CD4-positive, alpha-beta T cell (primary cell): ENCODE measurements at regions of chr1 and their contacts with region 1.

Region 1: GRCh38 chr1:231315887-231316286 is 21.8 kb downstream of the EXOC8 start:
- DNase-seq: peak in 12 of 14 experiments; percentile 15 to 65 (median 30)
- ATAC-seq: peak; percentile 48
- H3K4me3 ChIP-seq: no peak overlapping the region
- H3K4me3 Mint-ChIP-seq: no peak overlapping the region
- H3K27ac ChIP-seq: no peak overlapping the region
- H3K27ac Mint-ChIP-seq: no peak overlapping the region
- H3K4me1 ChIP-seq: no peaks in the 10 kb centered on the region
- H3K4me1 Mint-ChIP-seq: no peaks in the 10 kb centered on the region
- H3K27me3 ChIP-seq: no peaks in the 10 kb centered on the region
- H3K27me3 Mint-ChIP-seq: no peaks in the 10 kb centered on the region
- CTCF ChIP-seq: peak; percentile 33

Region 2: GRCh38 chr1:231603598-231604275 is 287.9 kb after region 1 on chr1:
- CTCF ChIA-PET with region 1: no interaction called
- POLR2A ChIA-PET with region 1: no interaction called
- intact Hi-C with region 1: loop called in 1 of 2 experiments (anchors 2 kb)
- DNase-seq: peak in 10 of 14 experiments; percentile 3 to 75 (median 34)
- ATAC-seq: peak; percentile 93
- H3K4me3 ChIP-seq: peak overlapping the region; percentile 57
- H3K4me3 Mint-ChIP-seq: peak overlapping the region; percentile 91
- H3K27ac ChIP-seq: peak overlapping the region in 1 of 2 donors; percentile 2
- H3K27ac Mint-ChIP-seq: peak overlapping the region; percentile 68
- H3K4me1 ChIP-seq: peaks cover 4% of the 10 kb centered on the region
- H3K4me1 Mint-ChIP-seq: peaks cover 10% of the 10 kb centered on the region
- H3K27me3 ChIP-seq: no peaks in the 10 kb centered on the region
- H3K27me3 Mint-ChIP-seq: no peaks in the 10 kb centered on the region
- CTCF ChIP-seq: peak; percentile 84